HEK293 (cell line): ENCODE measurements at regions of chr1 and their contacts with region 1.

Region 1: GRCh38 chr1:226186124-226187018 is at the start of gene ACBD3:
- H3K4me3 ChIP-seq: peak within 1 kb of the TSS; percentile 74
- H3K27ac ChIP-seq: peak within 1 kb of the TSS; percentile 93
- H3K4me1 ChIP-seq: peaks cover 13% of the 10 kb centered on the region
- CTCF ChIP-seq: peak; percentile 82

Region 2: GRCh38 chr1:226149806-226150205 is 36.6 kb before region 1 on chr1:
- CTCF ChIA-PET with region 1: interaction called, 16 read pairs
- POLR2A ChIA-PET with region 1: interaction called, 3 read pairs
- H3K4me3 ChIP-seq: no peak overlapping the region
- H3K27ac ChIP-seq: no peak overlapping the region
- H3K4me1 ChIP-seq: no peaks in the 10 kb centered on the region
- CTCF ChIP-seq: no peak

Region 3: DNA sequence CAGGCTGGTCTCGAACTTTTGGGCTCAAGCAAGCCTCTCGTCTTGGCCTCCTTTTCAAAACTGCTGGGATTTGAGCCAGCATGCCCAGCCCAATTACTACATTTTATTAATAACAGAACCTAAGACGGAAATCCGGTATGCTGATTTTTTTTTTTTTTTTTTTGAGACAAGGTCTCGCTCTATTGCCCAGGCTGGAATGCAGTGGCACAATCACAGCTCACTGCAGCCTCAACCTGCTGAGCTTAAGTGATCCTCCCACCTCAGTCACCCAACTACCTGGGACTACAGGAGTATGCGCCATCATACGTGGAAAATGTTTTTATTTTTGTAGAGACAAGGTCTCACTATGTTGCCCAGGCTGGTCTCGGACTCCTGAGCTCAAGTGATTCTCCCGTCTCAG is 20.0 kb before region 1 on chr1:
- CTCF ChIA-PET with region 1: interaction called, 11 read pairs
- POLR2A ChIA-PET with region 1: interaction called, 7 read pairs
- H3K4me3 ChIP-seq: no peak overlapping the region
- H3K27ac ChIP-seq: no peak overlapping the region
- H3K4me1 ChIP-seq: no peaks in the 10 kb centered on the region
- CTCF ChIP-seq: no peak

Region 4: GRCh38 chr1:226444901-226445300 is 258.5 kb after region 1 on chr1:
- CTCF ChIA-PET with region 1: no interaction called
- POLR2A ChIA-PET with region 1: no interaction called
- H3K4me3 ChIP-seq: no peak overlapping the region
- H3K27ac ChIP-seq: no peak overlapping the region
- H3K4me1 ChIP-seq: no peaks in the 10 kb centered on the region
- CTCF ChIP-seq: no peak